ENCODE measurements at regions of chr17 and their contacts with region 1.

Region 1: DNA sequence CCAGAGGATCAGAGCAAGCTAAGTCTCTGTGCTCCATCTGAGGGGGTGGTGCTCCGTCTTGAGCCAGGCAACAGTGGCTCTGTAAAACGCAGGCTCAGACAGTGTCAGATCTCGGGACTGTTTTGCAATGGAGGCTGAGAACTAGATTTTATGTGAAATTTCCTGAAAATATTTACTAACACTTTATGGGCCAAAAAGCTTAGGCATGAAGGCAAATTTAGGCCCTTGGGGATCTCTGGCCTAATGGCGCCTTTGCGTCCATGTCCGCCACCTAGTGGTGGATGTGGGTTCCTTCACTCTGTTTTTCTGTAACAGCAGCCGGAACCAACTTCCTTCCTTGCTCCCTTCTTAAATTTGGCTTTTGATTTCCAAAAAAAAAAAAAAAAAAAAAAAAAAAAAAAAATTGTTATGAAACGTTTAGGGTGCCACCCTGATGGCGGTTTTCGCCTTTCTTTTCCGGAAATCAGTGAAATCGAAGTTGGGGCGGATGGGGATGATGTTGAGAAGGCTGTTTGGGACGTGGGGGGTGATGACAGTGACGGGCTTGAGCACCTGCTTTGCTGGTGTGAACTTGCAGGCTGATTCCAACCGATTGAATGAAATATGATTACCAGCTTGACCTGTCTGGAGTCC is 14.0 kb upstream of the ELAC2 start:
- H3K4me3 ChIP-seq: no peak overlapping the region
- H3K27ac ChIP-seq: no peak overlapping the region
- H3K4me1 ChIP-seq: no peaks in the 10 kb centered on the region
- CTCF ChIP-seq: no peak

Region 2: GRCh38 chr17:12979246-12979645 is 52.6 kb before region 1 on chr17:
- CTCF ChIA-PET with region 1: no interaction called
- POLR2A ChIA-PET with region 1: no interaction called
- H3K4me3 ChIP-seq: no peak overlapping the region
- H3K27ac ChIP-seq: no peak overlapping the region
- H3K4me1 ChIP-seq: no peaks in the 10 kb centered on the region
- CTCF ChIP-seq: no peak

Region 3: GRCh38 chr17:12995106-12995895 is 36.5 kb before region 1 on chr17:
- CTCF ChIA-PET with region 1: no interaction called
- POLR2A ChIA-PET with region 1: no interaction called
- H3K4me3 ChIP-seq: no peak overlapping the region
- H3K27ac ChIP-seq: no peak overlapping the region
- H3K4me1 ChIP-seq: no peaks in the 10 kb centered on the region
- CTCF ChIP-seq: no peak

Region 4: GRCh38 chr17:13044572-13045065 is 12.8 kb after region 1 on chr17:
- CTCF ChIA-PET with region 1: interaction called, 89 read pairs
- POLR2A ChIA-PET with region 1: no interaction called
- H3K4me3 ChIP-seq: no peak overlapping the region
- H3K27ac ChIP-seq: no peak overlapping the region
- H3K4me1 ChIP-seq: no peaks in the 10 kb centered on the region; the same call in 1 of the 2 replicates
- CTCF ChIP-seq: no peak

Region 5: DNA sequence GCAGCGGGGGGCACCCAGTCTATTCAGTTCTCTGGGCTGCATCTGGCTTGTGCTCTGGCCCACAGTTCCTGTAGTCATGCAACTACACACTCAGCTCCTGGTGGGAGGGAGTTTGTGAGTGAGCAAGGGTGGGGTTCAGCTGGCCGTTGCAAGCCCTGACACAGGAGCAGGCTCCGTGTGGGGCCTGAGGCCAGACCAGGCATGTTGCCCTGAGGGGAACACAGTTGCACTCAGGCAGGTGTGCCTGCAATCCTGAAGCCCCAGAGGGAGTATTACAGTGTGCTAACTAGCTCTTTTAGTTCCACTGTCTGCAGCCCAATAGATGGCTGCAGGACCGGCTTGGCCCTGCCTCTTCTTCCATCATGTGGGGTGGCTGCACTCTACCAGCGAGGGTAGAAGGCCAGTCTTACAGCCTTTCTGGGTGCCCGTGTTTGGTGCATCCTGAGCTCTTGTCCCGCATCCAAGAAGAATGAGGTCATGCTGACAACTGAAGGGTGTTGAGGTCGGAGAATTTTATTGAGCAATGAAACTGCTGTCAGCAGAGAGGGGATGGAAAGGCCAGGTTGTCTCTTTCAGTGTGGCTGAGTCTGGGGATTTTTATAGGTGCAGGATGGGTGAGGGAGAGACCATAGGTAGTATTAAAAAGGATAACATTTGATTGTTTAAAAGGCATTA is 35.9 kb after region 1 on chr17:
- CTCF ChIA-PET with region 1: interaction called, 10 read pairs
- POLR2A ChIA-PET with region 1: no interaction called
- H3K4me3 ChIP-seq: no peak overlapping the region
- H3K27ac ChIP-seq: no peak overlapping the region
- H3K4me1 ChIP-seq: no peaks in the 10 kb centered on the region
- CTCF ChIP-seq: no peak

Region 6: GRCh38 chr17:13099926-13100325 is 68.1 kb after region 1 on chr17:
- CTCF ChIA-PET with region 1: interaction called, 11 read pairs
- POLR2A ChIA-PET with region 1: no interaction called
- H3K4me3 ChIP-seq: no peak overlapping the region
- H3K27ac ChIP-seq: no peak overlapping the region
- H3K4me1 ChIP-seq: no peaks in the 10 kb centered on the region
- CTCF ChIP-seq: no peak

Region 7: DNA sequence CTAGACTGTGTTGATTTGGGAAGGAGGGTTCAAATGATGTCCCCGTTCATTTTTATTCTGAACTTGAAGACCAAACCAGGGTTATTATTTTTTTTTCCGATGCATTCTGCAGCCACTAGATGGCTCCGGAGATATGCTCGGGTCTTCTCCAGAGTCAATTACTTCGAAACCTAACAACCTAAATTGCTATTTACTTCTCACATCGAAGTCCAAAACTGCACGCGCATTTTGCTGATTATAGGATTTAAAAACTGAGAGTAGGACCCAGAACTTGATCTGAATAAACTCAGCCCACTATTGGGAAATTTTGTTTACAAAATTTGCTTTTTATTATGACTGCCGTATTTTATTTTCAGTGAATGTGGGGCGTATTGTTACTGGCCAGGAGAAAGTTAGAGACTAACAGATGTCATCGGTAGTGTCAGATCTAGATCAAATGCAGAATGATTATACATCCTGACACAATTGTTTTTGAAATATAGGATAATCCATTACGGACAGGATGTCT is 306.1 kb after region 1 on chr17:
- CTCF ChIA-PET with region 1: interaction called, 10 read pairs
- POLR2A ChIA-PET with region 1: no interaction called
- H3K4me3 ChIP-seq: no peak overlapping the region
- H3K27ac ChIP-seq: no peak overlapping the region
- H3K4me1 ChIP-seq: no peaks in the 10 kb centered on the region; the same call in 1 of the 2 replicates
- CTCF ChIP-seq: peak; percentile 57; the same call in 1 of the 2 replicates

Region 8: DNA sequence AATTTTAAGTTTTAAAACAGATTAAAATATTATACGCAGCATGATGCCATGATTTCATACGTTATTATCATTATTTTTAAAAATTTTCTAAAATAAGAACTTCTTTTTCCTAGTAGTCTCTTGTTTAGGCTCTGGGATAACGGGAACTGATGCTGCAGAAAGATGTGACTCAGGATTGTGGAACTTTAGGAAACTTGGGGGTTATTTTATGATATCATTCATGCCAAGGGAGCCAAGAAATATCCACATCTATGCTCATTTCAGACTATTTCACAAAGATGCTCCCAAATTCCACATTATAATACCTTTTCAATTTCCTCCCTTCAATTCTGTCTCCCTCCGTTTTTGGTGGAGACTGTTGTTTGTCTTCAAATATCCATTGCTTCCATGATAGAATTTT is 333.5 kb after region 1 on chr17:
- CTCF ChIA-PET with region 1: no interaction called
- POLR2A ChIA-PET with region 1: no interaction called
- H3K4me3 ChIP-seq: no peak overlapping the region
- H3K27ac ChIP-seq: no peak overlapping the region
- H3K4me1 ChIP-seq: no peaks in the 10 kb centered on the region
- CTCF ChIP-seq: no peak